ENCODE measurements at regions of chr3 and their contacts with region 1.

Region 1: GRCh38 chr3:195616712-195617086 is 33.0 kb upstream of the APOD start:
- DNase-seq: no peak
- ATAC-seq: no peak
- H3K4me3 ChIP-seq: no peak overlapping the region
- H3K27ac ChIP-seq: no peak overlapping the region
- H3K4me1 ChIP-seq: no peaks in the 10 kb centered on the region
- H3K27me3 ChIP-seq: no peaks in the 10 kb centered on the region
- CTCF ChIP-seq: no peak

Region 2: GRCh38 chr3:195716865-195717210 is 100.1 kb after region 1 on chr3:
- intact Hi-C with region 1: loop called in 1 of 3 experiments (anchors 2 kb)
- DNase-seq: peak in 2 of 6 donors; percentile 44 to 66
- ATAC-seq: peak in 3 of 4 donors; percentile 11 to 36 (median 21)
- H3K4me3 ChIP-seq: no peak overlapping the region
- H3K27ac ChIP-seq: peak overlapping the region in 2 of 4 donors; percentile 45 to 53
- H3K4me1 ChIP-seq: peaks cover 0 to 6% (median 0%) of the 10 kb centered on the region in 3 donors
- H3K27me3 ChIP-seq: no peaks in the 10 kb centered on the region
- CTCF ChIP-seq: no peak

Region 3: DNA sequence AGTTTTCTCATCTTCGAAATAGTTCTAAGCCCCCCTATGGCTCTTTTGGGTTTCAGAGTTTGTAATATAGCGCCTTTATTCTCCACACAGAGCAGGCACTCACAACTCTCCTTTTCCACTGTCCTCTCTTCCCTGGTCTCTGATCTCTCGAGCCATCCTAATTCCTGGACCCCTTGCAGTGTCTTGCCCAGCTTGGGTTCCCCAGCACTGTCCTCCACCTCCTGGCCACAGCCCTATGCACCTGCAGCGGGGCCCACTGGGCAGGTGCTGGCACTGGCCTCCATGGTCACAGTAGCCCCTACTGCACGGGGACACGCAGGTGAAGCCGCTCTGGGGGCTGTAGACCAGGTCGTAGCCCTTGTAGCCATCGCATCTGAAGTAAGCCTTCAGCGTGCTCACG is 132.0 kb after region 1 on chr3:
- intact Hi-C with region 1: no loop called
- DNase-seq: no peak
- ATAC-seq: peak in 1 of 4 donors; percentile 15
- H3K4me3 ChIP-seq: no peak overlapping the region
- H3K27ac ChIP-seq: no peak overlapping the region
- H3K4me1 ChIP-seq: peaks cover 0 to 3% (median 0%) of the 10 kb centered on the region in 3 donors
- H3K27me3 ChIP-seq: no peaks in the 10 kb centered on the region
- CTCF ChIP-seq: no peak